ENCODE measurements at regions of chr12 and their contacts with region 1.

Region 1: DNA sequence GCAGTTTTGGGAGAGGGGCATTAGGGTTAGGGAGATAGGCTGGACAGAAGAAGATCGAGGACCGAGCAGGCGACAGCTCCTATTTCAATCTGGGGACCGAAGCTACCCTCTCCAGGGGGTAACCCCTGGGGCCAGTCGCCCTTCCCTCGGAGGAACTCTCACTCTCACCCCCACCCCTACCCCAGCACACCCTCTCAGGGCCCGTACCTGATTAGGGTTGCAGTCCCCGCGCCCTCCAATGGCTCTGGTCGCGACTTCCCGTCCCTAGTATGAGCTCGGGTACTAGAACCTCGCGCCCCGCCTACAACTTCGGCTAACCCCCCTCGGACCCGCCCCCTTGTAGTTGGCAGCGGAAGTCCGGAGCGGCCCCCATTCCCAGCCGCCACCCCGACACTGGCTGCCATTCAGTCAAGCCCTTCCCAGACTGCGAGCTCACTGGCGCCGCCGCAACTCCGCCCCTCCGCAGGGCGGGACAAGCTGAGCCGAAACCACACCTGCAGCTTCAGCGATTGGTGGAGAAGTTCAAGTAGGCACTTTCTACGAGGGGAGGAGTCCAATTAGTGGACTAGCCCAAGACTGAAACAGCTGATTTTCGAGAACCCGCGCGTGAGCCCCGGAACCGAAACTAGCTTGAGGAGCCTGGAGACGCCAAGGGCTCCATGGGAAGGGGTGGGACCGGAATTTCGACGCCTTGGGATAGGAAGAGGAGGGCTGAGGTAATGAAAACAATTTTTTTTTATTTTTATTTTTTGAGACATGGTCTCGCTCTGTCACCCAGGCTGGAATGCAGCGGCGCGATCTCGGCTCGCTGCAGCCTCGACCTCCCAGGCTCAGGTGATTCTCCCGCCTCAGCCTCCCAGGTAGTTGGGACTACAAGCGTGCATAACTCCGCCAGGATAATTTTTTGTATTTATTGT is at the start of gene STAT2:
- DNase-seq: peak; percentile 98
- ATAC-seq: peak; percentile 93
- H3K4me3 ChIP-seq: peak within 1 kb of the TSS; percentile 83 to 94 (median 87)
- H3K27ac ChIP-seq: peak within 1 kb of the TSS; percentile 83
- H3K4me1 ChIP-seq: peaks cover 72% of the 10 kb centered on the region
- H3K27me3 ChIP-seq: no peaks in the 10 kb centered on the region
- CTCF ChIP-seq: no peak
- EP300 ChIP-seq: peak; percentile 11 to 65; a peak in 2 of 4 replicates
- POLR2A ChIP-seq: peak; percentile 41 to 78; a peak in 3 of 4 replicates
- RAD21 ChIP-seq: peak; percentile 19; the same call in 1 of the 2 replicates
- total RNA-seq, gene STAT2: 41.6 and 43.5 TPM in 2 replicates

Region 2: GRCh38 chr12:56315622-56316473 is 44.3 kb before region 1 on chr12 and contains the start of gene CNPY2:
- CTCF ChIA-PET with region 1: no interaction called
- POLR2A ChIA-PET with region 1: interaction called, 56 read pairs
- in situ Hi-C with region 1: no loop called
- intact Hi-C with region 1: loop called (anchors 1 kb)
- DNase-seq: peak; percentile 99
- ATAC-seq: peak; percentile 96
- H3K4me3 ChIP-seq: peak within 1 kb of the TSS; percentile 83 to 90 (median 84)
- H3K27ac ChIP-seq: peak within 1 kb of the TSS; percentile 83
- H3K4me1 ChIP-seq: peaks cover 24% of the 10 kb centered on the region
- H3K27me3 ChIP-seq: no peaks in the 10 kb centered on the region; a peak in 1 of 5 replicates
- CTCF ChIP-seq: peak; percentile 98
- EP300 ChIP-seq: 0 out of 4 replicates have a peak, but pooled peaks of 1 of the 2 experiments have one; percentile 25
- POLR2A ChIP-seq: peak; percentile 91
- RAD21 ChIP-seq: peak; percentile 74
- total RNA-seq, gene CNPY2: 246 and 356 TPM in 2 replicates

Region 3: DNA sequence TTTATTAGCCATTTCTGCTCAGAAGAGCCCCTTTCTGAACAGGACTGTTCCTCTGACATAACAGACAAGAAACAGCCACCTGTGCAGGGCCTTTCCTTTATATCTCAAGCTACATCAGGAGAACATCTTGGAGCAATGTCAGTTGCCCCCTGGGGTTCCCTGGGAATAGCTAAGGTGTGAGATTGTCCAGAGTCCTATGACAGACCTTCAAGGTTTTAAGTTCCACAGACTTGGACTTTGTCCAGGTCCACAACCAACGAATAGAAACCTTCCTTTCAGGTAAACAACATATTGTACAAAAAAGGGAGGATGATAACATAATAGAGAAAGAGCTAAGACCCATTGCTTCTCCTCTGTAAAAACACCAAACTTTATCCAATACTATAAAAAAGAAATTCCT is 18.5 kb before region 1 on chr12:
- CTCF ChIA-PET with region 1: no interaction called
- POLR2A ChIA-PET with region 1: interaction called, 47 read pairs
- in situ Hi-C with region 1: no loop called
- intact Hi-C with region 1: no loop called
- DNase-seq: no peak
- ATAC-seq: no peak
- H3K4me3 ChIP-seq: no peak overlapping the region
- H3K27ac ChIP-seq: peak overlapping the region; percentile 43
- H3K4me1 ChIP-seq: peaks cover 36% of the 10 kb centered on the region
- H3K27me3 ChIP-seq: no peaks in the 10 kb centered on the region
- CTCF ChIP-seq: no peak
- EP300 ChIP-seq: no peak
- POLR2A ChIP-seq: no peak
- RAD21 ChIP-seq: no peak

Region 4: GRCh38 chr12:56375598-56376434 is 15.7 kb after region 1 on chr12:
- CTCF ChIA-PET with region 1: no interaction called
- POLR2A ChIA-PET with region 1: interaction called, 15 read pairs
- in situ Hi-C with region 1: no loop called
- intact Hi-C with region 1: loop called (anchors 1 kb)
- DNase-seq: no peak
- ATAC-seq: no peak
- H3K4me3 ChIP-seq: no peak overlapping the region
- H3K27ac ChIP-seq: no peak overlapping the region
- H3K4me1 ChIP-seq: peaks cover 45% of the 10 kb centered on the region
- H3K27me3 ChIP-seq: no peaks in the 10 kb centered on the region
- CTCF ChIP-seq: no peak
- EP300 ChIP-seq: no peak
- POLR2A ChIP-seq: no peak
- RAD21 ChIP-seq: no peak

Region 5: GRCh38 chr12:56461235-56462159 is 101.4 kb after region 1 on chr12:
- CTCF ChIA-PET with region 1: no interaction called
- POLR2A ChIA-PET with region 1: interaction called, 16 read pairs
- in situ Hi-C with region 1: no loop called
- intact Hi-C with region 1: loop called (anchors 2 kb)
- DNase-seq: peak; percentile 67
- ATAC-seq: no peak
- H3K4me3 ChIP-seq: no peak overlapping the region
- H3K27ac ChIP-seq: peak overlapping the region; percentile 54
- H3K4me1 ChIP-seq: peaks cover 62% of the 10 kb centered on the region
- H3K27me3 ChIP-seq: no peaks in the 10 kb centered on the region
- CTCF ChIP-seq: no peak
- EP300 ChIP-seq: peak; percentile 16 to 42; a peak in 1 of 4 replicates
- POLR2A ChIP-seq: no peak
- RAD21 ChIP-seq: no peak

Measured in HepG2 (cell line).